IMR-90 (cell line): ENCODE measurements at regions of chr6 and their contacts with region 1.

Region 1: GRCh38 chr6:63415286-63415685 is 95.5 kb upstream of the LGSN start:
- DNase-seq: no peak
- ATAC-seq: no peak
- H3K4me3 ChIP-seq: no peak overlapping the region
- H3K27ac ChIP-seq: no peak overlapping the region
- H3K4me1 ChIP-seq: no peaks in the 10 kb centered on the region
- H3K27me3 ChIP-seq: no peaks in the 10 kb centered on the region
- CTCF ChIP-seq: no peak
- POLR2A ChIP-seq: no peak
- RAD21 ChIP-seq: no peak

Region 2: DNA sequence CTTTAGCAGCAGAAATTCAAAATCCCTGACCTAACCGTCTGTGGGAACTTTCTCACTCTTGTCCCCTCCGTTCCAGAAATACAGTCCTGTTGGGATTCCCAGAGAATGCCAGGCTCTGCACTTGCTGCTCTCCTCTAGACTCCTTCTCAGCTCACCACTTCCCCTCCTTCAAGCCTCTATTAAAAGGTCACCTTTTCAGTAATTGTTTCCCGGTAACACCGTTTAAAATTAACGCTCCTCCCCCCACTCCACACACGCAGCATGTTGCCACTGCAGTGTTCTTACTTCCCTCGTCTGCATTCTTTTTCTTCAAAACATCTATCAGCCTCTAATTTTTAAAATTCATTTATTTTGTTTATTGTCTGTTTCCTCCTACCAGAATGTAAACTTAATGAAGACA is 46.9 kb before region 1 on chr6:
- CTCF ChIA-PET with region 1: no interaction called
- POLR2A ChIA-PET with region 1: no interaction called
- dilution Hi-C with region 1: no loop called
- in situ Hi-C with region 1: no loop called
- intact Hi-C with region 1: no loop called
- DNase-seq: no peak
- ATAC-seq: no peak
- H3K4me3 ChIP-seq: no peak overlapping the region
- H3K27ac ChIP-seq: no peak overlapping the region
- H3K4me1 ChIP-seq: no peaks in the 10 kb centered on the region
- H3K27me3 ChIP-seq: no peaks in the 10 kb centered on the region
- CTCF ChIP-seq: no peak
- POLR2A ChIP-seq: no peak
- RAD21 ChIP-seq: no peak

Region 3: GRCh38 chr6:64170316-64170715 is 755.0 kb after region 1 on chr6:
- CTCF ChIA-PET with region 1: interaction called, 10 read pairs
- POLR2A ChIA-PET with region 1: no interaction called
- dilution Hi-C with region 1: no loop called
- in situ Hi-C with region 1: no loop called
- intact Hi-C with region 1: no loop called
- DNase-seq: peak; percentile 3
- ATAC-seq: no peak
- H3K4me3 ChIP-seq: no peak overlapping the region
- H3K27ac ChIP-seq: no peak overlapping the region
- H3K4me1 ChIP-seq: no peaks in the 10 kb centered on the region
- H3K27me3 ChIP-seq: no peaks in the 10 kb centered on the region
- CTCF ChIP-seq: no peak
- POLR2A ChIP-seq: no peak
- RAD21 ChIP-seq: no peak